Activated T-helper 1 cell treated with anti-CD3 and anti-CD28 coated beads, Interleukin-12 subunit alpha, Interleukin-12 subunit beta, Interleukin-2, Interleukin-4 antibody, amounts not matched to agents 30 ng/mL and 10 ng/mL and 1 ng/mL, durations not matched to agents 14 hours and 24 hours and 36 hours (primary cell): ENCODE measurements at regions of chr6 and their contacts with region 1.

Region 1: DNA sequence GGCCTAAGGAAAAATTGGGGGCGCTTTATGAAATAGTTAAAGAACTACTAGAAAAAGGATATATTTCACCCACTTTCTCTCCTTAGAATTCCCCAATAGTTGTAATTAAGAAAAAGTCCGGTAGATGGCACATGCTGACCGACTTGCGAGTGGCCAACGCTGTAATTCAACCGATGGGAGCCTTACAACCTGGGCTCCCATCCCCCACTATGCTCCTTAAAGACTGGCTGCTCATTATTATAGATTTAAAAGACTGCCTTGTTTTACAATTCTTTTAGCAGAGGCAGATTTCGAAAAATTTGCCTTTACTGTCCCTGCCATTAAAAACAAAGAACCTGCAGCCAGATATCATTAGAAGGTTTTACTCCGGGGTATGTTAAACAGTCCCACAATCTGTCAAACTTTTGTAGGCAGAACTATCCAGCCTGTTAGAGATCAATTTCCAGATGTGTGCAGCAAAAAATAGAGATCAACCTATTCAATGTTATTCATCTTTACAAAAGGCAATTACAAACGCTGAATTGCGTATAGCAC is 58.5 kb upstream of the PRSS16 start:
- DNase-seq: peak; percentile 25
- H3K4me3 Mint-ChIP-seq: peak overlapping the region; percentile 93
- H3K27ac Mint-ChIP-seq: no peak overlapping the region
- H3K4me1 Mint-ChIP-seq: peaks cover 15% of the 10 kb centered on the region
- H3K27me3 Mint-ChIP-seq: peaks cover 4% of the 10 kb centered on the region

Region 2: DNA sequence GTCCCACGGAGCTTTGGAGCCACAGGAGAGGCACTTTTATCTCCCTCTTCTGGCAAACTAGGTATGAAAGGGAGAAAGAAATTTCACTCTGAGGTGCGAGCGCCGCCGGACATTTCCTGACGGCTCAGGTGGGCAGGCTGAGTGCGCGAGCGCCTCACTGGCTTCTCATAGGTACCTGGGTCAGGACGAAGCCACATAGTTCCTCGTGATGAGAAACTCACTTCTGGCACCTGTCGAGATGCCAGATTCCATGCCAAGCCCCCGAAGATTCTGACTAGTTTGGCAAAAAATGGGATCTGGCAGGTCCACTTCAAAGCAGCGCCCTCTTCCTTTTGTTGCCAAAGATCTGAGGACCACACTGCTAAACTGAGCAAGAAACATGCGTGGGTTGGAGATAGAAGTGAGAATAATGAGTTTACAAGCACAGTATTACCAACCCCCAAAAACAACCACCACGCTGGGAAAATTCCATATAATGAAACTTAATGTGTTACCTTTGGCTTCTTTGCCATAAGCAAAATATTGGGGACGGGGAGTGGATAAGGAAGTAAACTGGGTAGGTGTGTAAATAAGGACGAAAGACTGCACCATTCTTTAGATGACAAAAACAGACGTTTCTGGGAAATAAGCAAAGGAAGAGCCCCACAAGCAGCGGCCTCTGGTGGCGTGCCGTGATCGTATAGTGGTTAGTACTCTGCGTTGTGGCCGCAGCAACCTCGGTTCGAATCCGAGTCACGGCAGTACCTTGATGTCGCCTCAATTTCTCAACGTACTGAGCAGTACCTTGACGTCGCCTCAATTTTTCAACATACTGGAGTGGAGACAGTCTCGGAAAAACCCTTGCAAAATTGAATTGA is 31.3 kb before region 1 on chr6:
- intact Hi-C with region 1: loop called (anchors 1 kb)
- DNase-seq: peak; percentile 70
- H3K4me3 Mint-ChIP-seq: peak overlapping the region; percentile 77
- H3K27ac Mint-ChIP-seq: peak overlapping the region; percentile 80
- H3K4me1 Mint-ChIP-seq: peaks cover 47% of the 10 kb centered on the region
- H3K27me3 Mint-ChIP-seq: peaks cover 2% of the 10 kb centered on the region

Region 3: DNA sequence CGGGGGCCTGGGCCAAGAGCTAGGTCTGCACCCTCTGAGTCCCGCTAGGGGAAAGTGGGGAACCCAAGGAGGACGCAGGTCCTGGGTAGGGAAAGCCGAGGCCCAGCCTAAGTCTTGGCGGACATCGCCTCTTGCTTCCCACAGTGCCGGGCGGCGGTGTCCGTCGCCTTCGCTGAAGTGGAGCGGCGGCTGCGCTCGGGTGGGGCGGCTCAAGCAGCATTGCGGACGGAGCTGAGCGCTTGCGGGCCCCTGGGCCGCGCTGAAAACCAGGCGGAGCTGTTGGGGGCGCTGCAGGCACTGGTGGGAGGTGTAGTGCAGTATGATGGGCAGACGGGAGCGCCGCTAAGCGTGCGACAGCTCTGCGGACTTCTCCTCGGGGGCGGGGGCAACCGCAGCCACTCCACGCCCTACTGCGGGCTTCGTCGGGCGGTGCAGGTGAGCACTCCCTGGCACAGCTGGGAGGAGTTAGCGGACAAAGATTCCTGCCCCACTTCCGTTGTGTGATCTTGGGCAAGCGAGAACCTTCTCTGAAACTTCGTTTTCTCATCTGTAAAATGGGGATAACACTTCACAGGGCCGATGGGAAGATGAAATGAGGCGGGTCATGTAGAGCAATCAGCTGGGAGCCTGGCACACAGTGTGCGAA is 62.8 kb after region 1 on chr6:
- intact Hi-C with region 1: loop called (anchors 2 kb)
- DNase-seq: peak; percentile 51
- H3K4me3 Mint-ChIP-seq: peak overlapping the region; percentile 87
- H3K27ac Mint-ChIP-seq: no peak overlapping the region
- H3K4me1 Mint-ChIP-seq: peaks cover 5% of the 10 kb centered on the region
- H3K27me3 Mint-ChIP-seq: peaks cover 44% of the 10 kb centered on the region

Region 4: GRCh38 chr6:27479319-27480182 is 290.6 kb after region 1 on chr6:
- intact Hi-C with region 1: loop called (anchors 1 kb)
- DNase-seq: peak; percentile 81
- H3K4me3 Mint-ChIP-seq: no peak overlapping the region
- H3K27ac Mint-ChIP-seq: no peak overlapping the region
- H3K4me1 Mint-ChIP-seq: no peaks in the 10 kb centered on the region
- H3K27me3 Mint-ChIP-seq: peaks cover 10% of the 10 kb centered on the region

Region 5: DNA sequence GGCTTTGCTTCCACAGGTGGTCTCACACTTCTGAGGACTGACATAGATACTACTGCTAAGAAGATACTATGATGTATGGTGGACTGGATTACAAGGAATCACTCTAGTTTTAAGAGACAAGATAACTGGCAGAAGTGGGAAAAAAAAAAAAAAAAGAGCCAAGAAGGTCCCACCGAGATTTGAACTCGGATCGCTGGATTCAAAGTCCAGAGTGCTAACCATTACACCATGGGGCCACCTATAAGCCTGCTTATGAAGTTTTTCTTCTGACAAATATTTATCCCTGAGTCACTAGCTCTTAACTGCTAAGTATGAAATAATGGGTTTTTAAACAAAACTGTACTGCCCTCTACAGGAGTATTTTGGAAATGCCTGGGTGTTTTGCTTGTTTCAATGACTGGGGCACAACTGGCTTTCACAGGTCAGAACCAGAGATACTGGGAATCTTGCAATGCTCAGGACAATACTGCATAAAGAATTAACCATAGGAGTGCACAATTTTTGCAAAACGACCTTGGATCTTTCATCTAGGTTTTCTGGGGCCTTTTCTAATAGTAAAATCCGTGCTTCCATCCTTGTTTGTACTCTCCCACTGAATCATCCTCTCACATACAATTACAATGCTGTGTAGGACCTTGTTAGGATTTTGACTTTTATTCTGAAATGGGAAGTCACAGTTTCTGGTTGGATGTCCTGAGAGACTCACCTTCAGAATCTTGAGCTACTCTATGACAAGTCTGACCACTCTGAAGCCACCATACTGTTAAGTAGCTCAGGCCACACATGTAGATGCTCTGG is 606.9 kb after region 1 on chr6:
- intact Hi-C with region 1: loop called (anchors 1 kb)
- DNase-seq: peak; percentile 58
- H3K4me3 Mint-ChIP-seq: no peak overlapping the region
- H3K27ac Mint-ChIP-seq: peak overlapping the region; percentile 65
- H3K4me1 Mint-ChIP-seq: peaks cover 42% of the 10 kb centered on the region
- H3K27me3 Mint-ChIP-seq: peaks cover 12% of the 10 kb centered on the region